Cardiac septum (tissue), 1 donor: ENCODE measurements at regions of chr14 and their contacts with region 1.

Region 1: DNA sequence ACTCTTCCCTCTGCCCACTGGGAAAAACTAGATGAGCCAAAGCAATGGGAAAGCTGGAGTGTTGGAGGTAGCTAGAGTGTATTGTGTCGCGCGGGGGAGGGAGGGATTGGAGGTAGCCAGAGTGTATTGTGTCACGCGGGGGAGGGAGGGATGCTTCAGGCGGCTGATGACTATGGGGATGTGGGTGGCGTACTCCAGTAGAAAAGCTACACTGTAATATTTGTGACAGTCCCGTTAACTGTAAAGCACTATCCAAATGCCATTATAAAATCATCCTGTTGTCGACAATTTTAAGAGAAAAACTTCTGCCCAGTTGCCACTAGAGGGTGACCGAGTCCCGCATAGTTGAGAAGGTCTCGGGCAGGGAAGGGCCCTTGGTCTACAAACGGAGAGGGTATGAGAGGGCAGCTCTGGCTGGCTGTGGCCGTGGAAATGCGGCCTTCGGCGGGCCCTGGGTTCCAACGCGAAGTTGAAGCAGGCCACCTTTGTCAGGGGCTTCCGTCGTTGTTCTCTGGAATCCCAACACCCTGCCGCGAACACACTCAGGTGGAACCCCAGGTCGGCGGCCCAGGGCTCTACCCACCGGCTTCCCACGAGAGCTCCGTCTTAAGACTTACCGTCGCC is 15.1 kb upstream of the PLEK2 start:
- DNase-seq: no peak

Region 2: GRCh38 chr14:67396501-67396900 is 30.6 kb before region 1 on chr14:
- intact Hi-C with region 1: no loop called
- DNase-seq: no peak

Region 3: DNA sequence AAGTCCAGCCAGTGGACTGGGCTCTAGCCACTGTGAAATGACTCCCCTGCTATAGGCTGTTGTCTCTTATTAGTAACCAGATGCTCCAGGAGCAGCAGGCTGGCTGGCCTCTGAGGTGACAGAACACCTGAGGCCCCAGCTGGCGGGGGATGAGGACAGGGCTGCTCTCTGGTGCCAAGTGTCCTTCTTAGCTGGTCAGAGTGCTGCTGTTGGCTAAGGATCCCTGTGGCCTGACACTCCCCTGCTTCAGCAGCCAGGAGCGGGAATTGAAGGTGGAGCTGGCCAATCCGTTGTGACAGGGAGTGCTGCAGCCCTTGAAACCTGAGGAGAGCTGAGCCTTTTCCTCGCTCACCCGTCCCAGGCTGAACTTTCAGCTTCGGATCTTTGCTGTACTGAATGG is 30.7 kb after region 1 on chr14:
- intact Hi-C with region 1: no loop called
- DNase-seq: no peak

Region 4: DNA sequence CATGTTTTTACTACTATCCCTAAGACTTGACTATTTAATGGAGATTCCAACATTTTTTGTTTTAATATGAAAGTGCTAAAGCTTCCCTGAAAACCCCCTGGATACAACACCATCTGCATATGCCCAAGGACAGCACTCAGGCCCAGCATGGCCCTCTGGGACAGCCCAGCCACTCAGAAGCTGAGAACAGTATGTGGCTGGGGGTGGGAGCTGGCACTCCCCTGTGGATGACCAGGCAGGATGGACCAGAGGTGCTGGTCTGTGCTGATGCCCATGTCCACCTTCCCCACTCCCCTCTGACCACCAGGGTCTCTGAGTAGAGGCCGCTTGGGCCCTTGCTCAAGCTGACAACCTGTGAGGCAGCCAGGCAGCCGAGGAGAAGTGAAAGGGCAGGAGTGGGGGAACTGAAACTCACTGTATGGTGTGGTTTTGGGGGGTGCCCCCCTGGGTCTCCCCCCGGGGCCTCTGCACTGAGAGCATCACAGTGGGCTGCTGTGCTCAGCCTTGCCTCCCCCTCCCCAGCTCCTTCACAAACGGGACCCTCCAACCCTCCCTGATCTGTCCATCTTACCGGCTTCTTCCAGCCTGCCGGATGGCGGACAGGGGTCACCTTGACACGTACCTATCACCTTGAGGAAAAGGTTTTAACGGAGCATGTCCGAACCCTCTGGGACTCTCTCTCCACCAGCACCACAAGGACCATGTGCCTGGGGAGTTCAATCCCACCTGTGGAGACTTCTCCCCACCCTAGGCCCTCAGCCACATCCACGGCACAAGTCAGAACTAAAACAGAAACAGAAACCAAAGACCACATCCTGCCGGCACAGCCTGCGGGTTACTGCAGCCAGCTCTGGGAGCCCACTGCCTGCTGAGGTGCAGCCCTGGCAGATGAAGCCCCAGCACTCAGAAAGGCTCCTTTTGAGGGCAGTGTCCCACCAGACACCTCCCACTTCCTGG is 61.1 kb after region 1 on chr14 and contains the start of gene TMEM229B:
- intact Hi-C with region 1: loop called (anchors 5 kb)
- DNase-seq: no peak
- total RNA-seq, gene TMEM229B: 1.6 TPM

Region 5: DNA sequence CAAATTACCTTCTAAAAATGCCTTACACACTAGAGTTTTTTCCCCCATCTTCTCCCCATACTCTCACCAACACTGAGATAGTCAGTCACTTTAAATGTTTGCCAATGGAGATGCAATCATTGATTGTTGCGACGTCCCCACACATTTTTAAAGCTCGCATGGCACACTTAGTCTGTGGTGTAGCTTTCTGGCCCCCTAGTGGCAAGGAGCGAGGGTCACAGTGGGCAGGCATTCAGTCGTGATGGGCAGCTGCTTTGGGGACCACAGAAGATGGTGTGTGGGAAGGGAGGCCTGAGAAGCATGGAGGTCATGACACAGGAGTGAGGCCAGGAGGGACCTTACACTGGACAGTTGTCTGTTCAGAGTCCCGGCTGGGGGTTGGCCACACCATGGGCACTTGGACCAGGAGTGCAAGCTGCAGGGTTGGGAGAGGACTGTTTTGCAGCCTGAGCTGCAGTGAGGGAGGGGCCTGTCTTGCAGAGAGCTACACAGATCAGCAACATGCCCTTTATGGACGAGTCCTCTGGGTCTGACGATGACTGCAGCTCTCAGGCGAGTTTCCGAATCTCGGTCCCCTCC is 144.3 kb after region 1 on chr14:
- intact Hi-C with region 1: loop called (anchors 1 kb)
- DNase-seq: no peak